Colonic mucosa (tissue), 4 donors: ENCODE measurements at regions of chr4 and their contacts with region 1.

Region 1: GRCh38 chr4:40316782-40317635 is 18.1 kb upstream of the CHRNA9 start:
- DNase-seq: peak; percentile 64
- H3K4me3 ChIP-seq: peak overlapping the region; percentile 20
- H3K27ac ChIP-seq: peak overlapping the region; percentile 44
- H3K4me1 ChIP-seq: peaks cover 4% of the 10 kb centered on the region
- H3K27me3 ChIP-seq: no peaks in the 10 kb centered on the region
- CTCF ChIP-seq: peak; percentile 80

Region 2: GRCh38 chr4:40056716-40057585 is 260.1 kb before region 1 on chr4 and contains the start of gene N4BP2:
- intact Hi-C with region 1: loop called (anchors 10 kb)
- DNase-seq: peak; percentile 86
- H3K4me3 ChIP-seq: peak within 1 kb of the TSS; percentile 82
- H3K27ac ChIP-seq: peak within 1 kb of the TSS; percentile 100
- H3K4me1 ChIP-seq: peaks cover 8% of the 10 kb centered on the region
- H3K27me3 ChIP-seq: no peaks in the 10 kb centered on the region
- CTCF ChIP-seq: peak; percentile 70
- total RNA-seq, gene N4BP2: 5.1 to 7.5 TPM

Region 3: GRCh38 chr4:40199999-40200874 is 116.8 kb before region 1 on chr4:
- intact Hi-C with region 1: no loop called
- DNase-seq: no peak
- H3K4me3 ChIP-seq: peak overlapping the region; percentile 8
- H3K27ac ChIP-seq: peak overlapping the region; percentile 60
- H3K4me1 ChIP-seq: no peaks in the 10 kb centered on the region
- H3K27me3 ChIP-seq: no peaks in the 10 kb centered on the region
- CTCF ChIP-seq: no peak